Right lobe of liver (tissue), 6 donors: ENCODE measurements at regions of chr16 and their contacts with region 1.

Region 1: GRCh38 chr16:89873972-89874689 is 739 bp downstream of the TCF25 start:
- DNase-seq: peak; percentile 98
- ATAC-seq: peak; percentile 89 to 93 (median 91)
- H3K4me3 ChIP-seq: peak overlapping the region; percentile 70 to 96 (median 89)
- H3K27ac ChIP-seq: peak overlapping the region; percentile 99
- H3K4me1 ChIP-seq: peaks cover 0 to 20% (median 7%) of the 10 kb centered on the region in 4 donors
- H3K27me3 ChIP-seq: no peaks in the 10 kb centered on the region
- CTCF ChIP-seq: no peak
- POLR2A ChIP-seq: no peak

Region 2: GRCh38 chr16:89657442-89658220 is 216.5 kb before region 1 on chr16 and contains the starts of genes CHMP1A and SPATA33:
- intact Hi-C with region 1: no loop called
- DNase-seq: peak; percentile 90 to 92 (median 91)
- ATAC-seq: peak; percentile 94 to 97 (median 96)
- H3K4me3 ChIP-seq: peak within 1 kb of the TSS; percentile 83 to 100 (median 98)
- H3K27ac ChIP-seq: peak within 1 kb of the TSS; percentile 40 to 76 (median 63)
- H3K4me1 ChIP-seq: peaks cover 0 to 13% (median 0%) of the 10 kb centered on the region in 4 donors
- H3K27me3 ChIP-seq: no peaks in the 10 kb centered on the region
- CTCF ChIP-seq: no peak
- POLR2A ChIP-seq: peak; percentile 46
- total RNA-seq, gene CHMP1A: 27.2 to 42.3 (median 33.1) TPM
- total RNA-seq, gene SPATA33: 1.8 to 5.0 (median 3.3) TPM

Region 3: GRCh38 chr16:89700100-89700648 is 174.0 kb before region 1 on chr16:
- intact Hi-C with region 1: loop called in 1 of 2 experiments (anchors 10 kb)
- DNase-seq: peak; percentile 100
- ATAC-seq: peak; percentile 76 to 83 (median 80)
- H3K4me3 ChIP-seq: peak overlapping the region; percentile 65 to 74 (median 69)
- H3K27ac ChIP-seq: peak overlapping the region; percentile 74 to 80 (median 79)
- H3K4me1 ChIP-seq: peaks cover 0 to 19% (median 7%) of the 10 kb centered on the region in 4 donors
- H3K27me3 ChIP-seq: no peaks in the 10 kb centered on the region
- CTCF ChIP-seq: peak; percentile 84 to 90 (median 88)
- POLR2A ChIP-seq: peak; percentile 52

Region 4: DNA sequence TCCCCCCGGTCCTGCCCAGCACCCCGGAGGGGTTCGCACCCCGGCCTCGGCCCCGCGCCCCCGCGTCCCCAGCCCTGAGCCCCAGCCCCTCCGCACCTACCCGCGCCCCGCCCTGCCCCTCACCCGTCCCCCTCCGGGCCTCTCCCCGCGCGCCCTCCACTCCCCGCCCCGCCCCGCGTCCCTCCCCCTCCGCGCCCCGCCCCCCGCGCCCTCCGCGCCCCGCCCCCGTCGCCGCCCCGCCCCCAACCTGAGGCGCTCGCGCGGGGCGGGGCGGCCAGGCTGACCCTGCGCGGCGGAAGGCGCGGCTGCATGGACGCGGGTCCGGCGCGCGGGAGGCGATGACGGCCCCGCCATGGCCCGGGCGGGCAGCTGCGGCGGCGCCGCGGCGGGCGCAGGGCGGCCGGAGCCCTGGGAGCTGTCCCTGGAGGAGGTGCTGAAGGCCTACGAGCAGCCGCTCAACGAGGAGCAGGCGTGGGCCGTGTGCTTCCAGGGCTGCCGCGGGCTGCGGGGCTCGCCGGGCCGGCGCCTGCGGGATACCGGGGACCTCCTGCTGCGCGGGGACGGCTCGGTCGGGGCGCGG is 45.8 kb before region 1 on chr16 and contains the start of gene SPIRE2:
- intact Hi-C with region 1: loop called in 1 of 2 experiments (anchors 5 kb)
- DNase-seq: peak; percentile 70 to 78 (median 74)
- ATAC-seq: peak; percentile 74 to 82 (median 76)
- H3K4me3 ChIP-seq: peak within 1 kb of the TSS; percentile 57 to 68 (median 64)
- H3K27ac ChIP-seq: peak within 1 kb of the TSS; percentile 63 to 93 (median 83)
- H3K4me1 ChIP-seq: peaks cover 0 to 14% (median 0%) of the 10 kb centered on the region in 4 donors
- H3K27me3 ChIP-seq: no peaks in the 10 kb centered on the region
- CTCF ChIP-seq: no peak
- POLR2A ChIP-seq: no peak
- total RNA-seq, gene SPIRE2: 4.8 to 7.8 (median 6.1) TPM